Body of pancreas (tissue), 4 donors: ENCODE measurements at regions of chr7 and their contacts with region 1.

Region 1: GRCh38 chr7:95723592-95724180 is 48.7 kb upstream of the DYNC1I1 start:
- DNase-seq: peak; percentile 39 to 57 (median 54)
- ATAC-seq: peak; percentile 73
- H3K4me3 ChIP-seq: no peak overlapping the region
- H3K27ac ChIP-seq: no peak overlapping the region
- H3K4me1 ChIP-seq: no peaks in the 10 kb centered on the region
- H3K27me3 ChIP-seq: no peaks in the 10 kb centered on the region
- CTCF ChIP-seq: peak in 6 of 7 experiments; percentile 33 to 82 (median 60)
- POLR2A ChIP-seq: no peak

Region 2: DNA sequence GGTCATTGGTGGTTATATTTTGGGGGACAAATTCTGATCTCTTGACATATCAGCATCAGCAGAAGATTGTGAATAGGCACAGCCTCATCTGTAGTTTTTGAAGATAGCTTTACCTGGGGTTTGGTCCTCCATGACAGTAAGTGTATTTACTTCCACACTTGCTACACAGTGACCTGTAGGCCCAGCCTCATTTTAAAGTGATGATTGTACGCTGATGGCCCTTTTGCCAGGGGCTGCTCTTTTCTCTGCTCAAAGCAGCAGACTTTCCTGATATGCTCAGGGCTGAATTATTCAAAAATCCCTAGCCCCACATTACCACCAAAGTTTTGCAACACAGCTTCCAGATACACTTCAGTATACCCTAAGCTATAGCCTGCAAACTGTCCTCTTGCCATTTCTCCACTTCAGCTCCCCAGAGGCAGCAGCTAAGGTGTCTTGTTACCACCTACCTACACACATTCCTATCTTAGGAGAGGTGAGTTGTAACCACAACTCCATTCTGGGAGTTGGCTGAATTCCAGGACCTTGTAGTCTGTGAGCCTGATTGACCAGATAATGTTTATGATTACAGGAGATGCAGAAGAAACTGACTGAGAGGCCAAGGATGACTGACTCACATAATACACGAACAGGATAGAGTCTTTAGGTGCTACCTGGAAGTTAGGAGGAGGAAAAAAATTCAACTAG is 231.9 kb before region 1 on chr7:
- intact Hi-C with region 1: no loop called
- DNase-seq: no peak
- ATAC-seq: no peak
- H3K4me3 ChIP-seq: no peak overlapping the region
- H3K27ac ChIP-seq: no peak overlapping the region
- H3K4me1 ChIP-seq: no peaks in the 10 kb centered on the region
- H3K27me3 ChIP-seq: no peaks in the 10 kb centered on the region
- CTCF ChIP-seq: no peak
- POLR2A ChIP-seq: no peak

Region 3: GRCh38 chr7:95865716-95866371 is 142.2 kb after region 1 on chr7:
- intact Hi-C with region 1: loop called (anchors 5 kb)
- DNase-seq: no peak
- ATAC-seq: no peak
- H3K4me3 ChIP-seq: no peak overlapping the region
- H3K27ac ChIP-seq: no peak overlapping the region
- H3K4me1 ChIP-seq: no peaks in the 10 kb centered on the region
- H3K27me3 ChIP-seq: no peaks in the 10 kb centered on the region
- CTCF ChIP-seq: no peak
- POLR2A ChIP-seq: no peak

Region 4: GRCh38 chr7:96143495-96144259 is 420.0 kb after region 1 on chr7:
- intact Hi-C with region 1: no loop called
- DNase-seq: no peak
- ATAC-seq: no peak
- H3K4me3 ChIP-seq: no peak overlapping the region
- H3K27ac ChIP-seq: no peak overlapping the region
- H3K4me1 ChIP-seq: no peaks in the 10 kb centered on the region
- H3K27me3 ChIP-seq: no peaks in the 10 kb centered on the region
- CTCF ChIP-seq: no peak
- POLR2A ChIP-seq: no peak